ENCODE measurements at regions of chr4 and their contacts with region 1.

Region 1: DNA sequence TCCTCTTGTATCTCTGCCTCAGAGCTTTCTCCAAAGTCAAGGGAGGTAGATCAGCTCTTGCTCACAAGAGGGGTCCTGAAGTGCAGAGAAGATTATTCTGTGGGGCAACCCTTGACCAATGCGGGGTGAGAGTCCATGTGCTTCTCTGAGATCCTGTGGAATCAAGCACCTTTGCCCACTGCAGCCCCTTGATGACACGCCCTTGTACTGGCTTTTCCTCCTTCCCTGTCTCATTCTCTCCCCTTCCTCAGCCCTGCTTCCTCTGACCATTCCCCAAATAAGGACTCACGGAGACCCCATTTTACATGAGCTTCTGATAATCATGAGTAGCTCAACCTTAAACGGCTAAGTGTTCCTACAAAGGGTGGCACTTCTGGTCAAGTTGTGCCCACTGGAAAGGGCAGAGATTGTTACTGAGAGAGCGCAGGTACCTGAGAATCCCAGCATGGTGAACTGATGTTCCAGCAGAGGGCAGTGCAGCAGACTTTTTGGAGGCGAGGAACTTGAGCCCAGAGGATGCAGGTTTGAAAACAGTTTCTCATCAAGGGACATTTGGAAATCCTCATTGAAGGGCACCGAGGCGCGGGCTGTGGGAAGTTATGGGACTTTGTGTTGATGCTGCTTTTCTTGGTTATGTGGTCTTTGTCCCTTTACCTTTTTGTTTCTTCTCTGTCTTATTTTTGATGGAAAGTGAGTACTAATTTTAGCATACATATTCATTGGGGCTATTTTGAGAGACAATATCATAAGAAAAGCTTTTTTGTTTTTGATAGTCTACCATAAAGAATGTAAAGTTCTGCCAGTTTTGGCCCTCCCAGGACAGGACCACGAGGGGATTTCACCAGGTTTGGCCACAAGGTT is 201.3 kb downstream of the RBM46 start:
- DNase-seq: peak; percentile 82
- H3K4me3 Mint-ChIP-seq: no peak overlapping the region
- H3K27ac Mint-ChIP-seq: peak overlapping the region; percentile 20
- H3K4me1 Mint-ChIP-seq: peaks cover 6% of the 10 kb centered on the region
- H3K27me3 Mint-ChIP-seq: no peaks in the 10 kb centered on the region
- CTCF ChIP-seq: peak; percentile 69

Region 2: DNA sequence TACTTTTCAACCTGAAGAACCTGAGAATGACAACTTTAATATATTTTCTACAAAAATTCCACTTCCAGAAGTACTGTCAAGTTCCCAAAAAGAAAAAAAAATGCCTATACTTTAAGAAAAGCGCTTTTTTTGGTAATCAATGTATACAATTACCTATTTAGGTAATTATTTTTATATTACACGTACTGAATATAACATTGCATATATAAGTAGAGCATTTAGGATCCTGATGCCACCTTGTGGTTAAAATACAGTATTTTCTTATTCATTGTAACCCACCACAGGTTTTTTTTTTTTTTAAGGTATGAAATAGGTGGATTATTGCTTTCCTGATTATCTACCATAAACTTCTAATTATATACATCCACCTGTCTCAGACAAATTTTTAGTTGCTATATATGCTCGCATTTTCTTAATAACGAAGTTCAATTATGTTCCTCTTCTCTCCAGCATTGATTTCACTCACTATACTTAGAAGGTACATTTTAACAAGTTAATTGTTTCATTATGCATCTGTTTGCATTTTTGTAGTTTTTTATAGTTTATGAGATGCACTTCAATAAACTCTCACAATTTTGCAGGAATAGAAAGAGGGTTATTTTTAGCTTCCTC is 389.1 kb after region 1 on chr4:
- CTCF ChIA-PET with region 1: interaction called, 41 read pairs
- POLR2A ChIA-PET with region 1: no interaction called
- intact Hi-C with region 1: loop called (anchors 1 kb)
- DNase-seq: peak; percentile 40
- H3K4me3 Mint-ChIP-seq: no peak overlapping the region
- H3K27ac Mint-ChIP-seq: no peak overlapping the region
- H3K4me1 Mint-ChIP-seq: peaks cover 6% of the 10 kb centered on the region
- H3K27me3 Mint-ChIP-seq: no peaks in the 10 kb centered on the region
- CTCF ChIP-seq: peak; percentile 49